H1 (cell line): ENCODE measurements at regions of chr12 and their contacts with region 1.

Region 1: GRCh38 chr12:54214553-54215406 is 26.0 kb upstream of the SMUG1 start:
- DNase-seq: peak; percentile 78 to 96
- H3K4me3 ChIP-seq: no peak overlapping the region
- H3K27ac ChIP-seq: no peak overlapping the region
- H3K4me1 ChIP-seq: peaks cover 0 to 26% (median 17%) of the 10 kb centered on the region in 4 experiments; a peak in 6 of 7 replicates
- H3K27me3 ChIP-seq: peaks cover 1 to 42% (median 27%) of the 10 kb centered on the region in 4 experiments; a peak in 6 of 7 replicates
- CTCF ChIP-seq: peak; percentile 98 to 100 (median 100)
- EP300 ChIP-seq: no peak
- POLR2A ChIP-seq: no peak
- RAD21 ChIP-seq: peak; percentile 54 to 68

Region 2: DNA sequence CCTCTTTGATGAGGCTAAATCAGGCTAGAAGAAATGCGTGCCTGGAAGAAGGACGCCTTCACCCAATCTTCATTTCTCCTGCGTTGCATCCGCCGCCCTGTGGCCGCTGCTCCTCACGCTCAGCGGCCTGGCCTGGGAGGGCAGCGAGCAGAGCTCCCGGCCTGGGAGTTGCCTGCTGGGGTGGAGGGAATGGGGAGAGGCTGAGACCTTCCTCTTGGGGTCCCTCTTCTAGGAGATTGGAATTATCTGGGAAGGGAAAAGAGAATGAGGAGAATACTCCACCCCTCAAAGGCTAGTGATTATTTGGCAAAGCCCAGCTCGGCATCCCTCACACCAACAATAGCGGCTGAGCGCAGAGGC is 262.5 kb before region 1 on chr12:
- CTCF ChIA-PET with region 1: no interaction called
- POLR2A ChIA-PET with region 1: no interaction called
- DNase-seq: peak in 1 of 2 experiments; percentile 57
- H3K4me3 ChIP-seq: no peak overlapping the region
- H3K27ac ChIP-seq: no peak overlapping the region
- H3K4me1 ChIP-seq: peaks cover 0 to 19% (median 4%) of the 10 kb centered on the region in 4 experiments; a peak in 6 of 7 replicates
- H3K27me3 ChIP-seq: peaks cover 100% of the 10 kb centered on the region in 4 experiments
- CTCF ChIP-seq: peak in 2 of 3 experiments; percentile 12 to 29; a peak in 1 of 4 replicates
- EP300 ChIP-seq: no peak
- POLR2A ChIP-seq: no peak
- RAD21 ChIP-seq: peak; percentile 6; a peak in 1 of 4 replicates

Region 3: GRCh38 chr12:54024127-54024526 is 190.7 kb before region 1 on chr12:
- CTCF ChIA-PET with region 1: interaction called, 15 read pairs
- POLR2A ChIA-PET with region 1: no interaction called
- DNase-seq: no peak
- H3K4me3 ChIP-seq: no peak overlapping the region
- H3K27ac ChIP-seq: no peak overlapping the region
- H3K4me1 ChIP-seq: peaks cover 0 to 6% (median under 1%) of the 10 kb centered on the region in 4 experiments; a peak in 3 of 7 replicates
- H3K27me3 ChIP-seq: peaks cover 97 to 100% (median 100%) of the 10 kb centered on the region in 4 experiments
- CTCF ChIP-seq: no peak
- EP300 ChIP-seq: no peak
- POLR2A ChIP-seq: no peak
- RAD21 ChIP-seq: no peak

Region 4: GRCh38 chr12:54201001-54201794 is 13.6 kb before region 1 on chr12:
- CTCF ChIA-PET with region 1: interaction called, 178 read pairs
- POLR2A ChIA-PET with region 1: interaction called, 4 read pairs
- DNase-seq: peak in 1 of 2 experiments; percentile 90
- H3K4me3 ChIP-seq: no peak overlapping the region
- H3K27ac ChIP-seq: no peak overlapping the region
- H3K4me1 ChIP-seq: peaks cover 0 to 5% (median 0%) of the 10 kb centered on the region in 4 experiments; a peak in 3 of 7 replicates
- H3K27me3 ChIP-seq: peaks cover 6 to 61% (median 39%) of the 10 kb centered on the region in 4 experiments
- CTCF ChIP-seq: peak; percentile 97 to 100 (median 99)
- EP300 ChIP-seq: no peak
- POLR2A ChIP-seq: no peak
- RAD21 ChIP-seq: peak; percentile 83 to 89

Region 5: GRCh38 chr12:54285150-54286041 is 70.6 kb after region 1 on chr12:
- CTCF ChIA-PET with region 1: interaction called, 9 read pairs
- POLR2A ChIA-PET with region 1: interaction called, 52 read pairs
- DNase-seq: no peak
- H3K4me3 ChIP-seq: peak overlapping the region in 1 of 4 experiments; percentile 33; a peak in 2 of 8 replicates
- H3K27ac ChIP-seq: no peak overlapping the region
- H3K4me1 ChIP-seq: peaks cover 0 to 7% (median 3%) of the 10 kb centered on the region in 4 experiments; a peak in 5 of 7 replicates
- H3K27me3 ChIP-seq: no peaks in the 10 kb centered on the region
- CTCF ChIP-seq: no peak
- EP300 ChIP-seq: no peak
- POLR2A ChIP-seq: no peak; a peak in 1 of 3 replicates
- RAD21 ChIP-seq: no peak

Region 6: GRCh38 chr12:54337280-54337842 is 122.6 kb after region 1 on chr12:
- CTCF ChIA-PET with region 1: interaction called, 22 read pairs
- POLR2A ChIA-PET with region 1: interaction called, 3 read pairs
- DNase-seq: no peak
- H3K4me3 ChIP-seq: no peak overlapping the region
- H3K27ac ChIP-seq: no peak overlapping the region
- H3K4me1 ChIP-seq: no peaks in the 10 kb centered on the region
- H3K27me3 ChIP-seq: no peaks in the 10 kb centered on the region
- CTCF ChIP-seq: no peak
- EP300 ChIP-seq: no peak
- POLR2A ChIP-seq: no peak
- RAD21 ChIP-seq: peak in 1 of 2 experiments; percentile 26; a peak in 1 of 4 replicates

Region 7: GRCh38 chr12:54368709-54369583 is 154.2 kb after region 1 on chr12:
- CTCF ChIA-PET with region 1: interaction called, 29 read pairs
- POLR2A ChIA-PET with region 1: interaction called, 4 read pairs
- DNase-seq: peak in 1 of 2 experiments; percentile 90
- H3K4me3 ChIP-seq: peak overlapping the region; percentile 4 to 64 (median 17); a peak in 5 of 8 replicates
- H3K27ac ChIP-seq: no peak overlapping the region
- H3K4me1 ChIP-seq: peaks cover 0 to 11% (median 6%) of the 10 kb centered on the region in 4 experiments; a peak in 5 of 7 replicates
- H3K27me3 ChIP-seq: peaks cover 0 to 16% (median 12%) of the 10 kb centered on the region in 4 experiments; a peak in 6 of 7 replicates
- CTCF ChIP-seq: peak; percentile 90 to 94 (median 94)
- EP300 ChIP-seq: no peak
- POLR2A ChIP-seq: no peak
- RAD21 ChIP-seq: peak; percentile 84 to 88

Region 8: DNA sequence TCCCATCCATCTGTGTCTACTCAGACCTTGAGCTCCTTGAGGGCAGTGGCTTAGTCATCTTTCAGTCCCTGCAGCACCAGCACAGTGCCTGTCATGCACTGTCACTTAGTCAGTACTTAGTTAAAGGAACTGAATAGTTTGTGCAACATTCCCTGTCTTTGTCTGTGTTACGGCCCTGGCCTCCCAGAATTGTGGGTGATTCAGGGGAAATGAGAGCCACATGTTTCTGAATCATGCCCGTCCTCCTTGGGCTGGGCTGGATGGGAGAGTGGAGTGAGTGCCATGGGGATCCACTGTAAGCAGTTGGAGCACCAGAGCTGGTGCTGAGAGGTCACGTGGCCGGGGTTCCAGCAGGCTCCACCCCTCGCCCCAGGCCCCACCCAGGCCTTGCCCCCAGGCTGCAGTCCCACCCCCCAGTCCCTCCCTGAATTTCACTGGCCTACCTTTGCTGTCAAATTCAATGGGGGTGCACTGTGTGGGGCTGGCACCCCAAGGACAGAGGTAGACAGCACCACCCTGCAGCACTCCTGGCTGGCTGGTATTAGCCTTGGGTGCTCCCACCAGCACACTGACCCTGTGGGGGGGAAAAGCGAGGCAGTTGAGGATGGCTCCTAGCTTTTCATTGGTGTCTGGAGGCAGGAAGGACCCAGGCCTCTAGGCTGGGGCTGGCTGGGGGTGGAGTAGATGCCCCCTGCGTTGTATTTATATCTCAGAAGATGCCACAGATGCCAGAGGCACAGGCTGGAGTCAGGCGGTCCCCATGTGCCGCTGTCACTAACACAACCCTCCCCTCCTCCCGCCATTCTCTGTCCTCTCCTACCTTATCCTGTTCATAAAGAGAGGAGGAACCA is 196.8 kb after region 1 on chr12:
- CTCF ChIA-PET with region 1: no interaction called
- POLR2A ChIA-PET with region 1: no interaction called
- DNase-seq: peak in 1 of 2 experiments; percentile 67
- H3K4me3 ChIP-seq: no peak overlapping the region
- H3K27ac ChIP-seq: no peak overlapping the region
- H3K4me1 ChIP-seq: peaks cover 0 to 7% (median 0%) of the 10 kb centered on the region in 4 experiments; a peak in 2 of 7 replicates
- H3K27me3 ChIP-seq: no peaks in the 10 kb centered on the region
- CTCF ChIP-seq: no peak
- EP300 ChIP-seq: no peak
- POLR2A ChIP-seq: no peak
- RAD21 ChIP-seq: no peak